ENCODE measurements at regions of chr13 and their contacts with region 1.

Region 1: GRCh38 chr13:85772379-85772778 is 26.8 kb downstream of the SLITRK6 start:
- DNase-seq: no peak
- ATAC-seq: no peak
- H3K4me3 ChIP-seq: no peak overlapping the region
- H3K27ac ChIP-seq: no peak overlapping the region
- H3K4me1 ChIP-seq: no peaks in the 10 kb centered on the region
- H3K27me3 ChIP-seq: no peaks in the 10 kb centered on the region

Region 2: GRCh38 chr13:85638815-85639393 is 133.5 kb before region 1 on chr13:
- intact Hi-C with region 1: no loop called
- DNase-seq: no peak
- ATAC-seq: no peak
- H3K4me3 ChIP-seq: no peak overlapping the region
- H3K27ac ChIP-seq: no peak overlapping the region
- H3K4me1 ChIP-seq: no peaks in the 10 kb centered on the region
- H3K27me3 ChIP-seq: no peaks in the 10 kb centered on the region

Region 3: DNA sequence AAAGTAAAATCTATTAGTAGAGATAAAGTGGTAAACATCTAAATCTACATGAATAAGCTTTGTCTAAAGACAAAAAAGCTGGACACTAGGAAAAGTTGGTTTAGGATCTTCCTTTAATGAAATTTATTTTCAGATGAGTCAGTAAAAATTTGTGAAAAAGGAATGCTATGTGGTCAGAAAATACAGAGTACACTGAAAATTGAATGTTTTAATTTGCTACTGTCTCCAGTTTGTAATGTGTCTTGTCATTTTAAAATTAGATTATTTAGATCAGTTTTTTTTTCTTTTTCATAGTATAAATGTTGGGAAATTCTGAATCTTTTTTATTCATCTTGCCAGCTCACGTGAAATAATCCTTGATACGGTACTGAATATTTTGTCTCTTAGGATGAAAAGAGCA is 30.0 kb before region 1 on chr13:
- intact Hi-C with region 1: loop called in 1 of 2 experiments (anchors 2 kb)
- DNase-seq: no peak
- ATAC-seq: no peak
- H3K4me3 ChIP-seq: no peak overlapping the region
- H3K27ac ChIP-seq: no peak overlapping the region
- H3K4me1 ChIP-seq: no peaks in the 10 kb centered on the region
- H3K27me3 ChIP-seq: no peaks in the 10 kb centered on the region

Region 4: DNA sequence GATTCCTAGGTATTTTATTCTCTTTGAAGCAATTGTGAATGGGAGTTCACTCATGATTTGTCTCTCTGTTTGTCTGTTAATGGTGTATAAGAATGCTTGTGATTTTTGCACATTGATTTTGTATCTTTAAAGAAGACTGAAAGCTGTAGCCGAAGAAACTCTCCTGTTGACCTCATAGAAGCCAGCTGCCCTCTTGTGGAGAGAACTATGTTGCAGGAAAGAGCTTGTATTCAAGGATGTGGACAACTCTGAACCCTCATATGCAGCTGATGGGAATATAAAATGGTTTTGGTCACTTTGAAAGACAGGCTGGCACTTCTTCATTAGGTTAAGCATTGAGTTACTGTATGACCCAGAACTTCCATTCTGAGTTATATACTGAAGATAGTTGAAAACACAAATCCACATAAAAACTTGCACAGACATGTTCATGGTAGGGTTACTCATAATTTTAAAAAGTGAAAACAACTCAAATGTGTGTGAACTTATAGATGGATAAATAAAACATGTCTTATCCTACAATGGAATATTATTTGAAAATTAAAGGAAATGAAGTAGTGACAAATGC is 92.7 kb after region 1 on chr13:
- intact Hi-C with region 1: no loop called
- DNase-seq: no peak
- ATAC-seq: no peak
- H3K4me3 ChIP-seq: no peak overlapping the region
- H3K27ac ChIP-seq: no peak overlapping the region
- H3K4me1 ChIP-seq: no peaks in the 10 kb centered on the region
- H3K27me3 ChIP-seq: no peaks in the 10 kb centered on the region